ENCODE measurements at regions of chr2 and their contacts with region 1.

Region 1: GRCh38 chr2:144320491-144320890 is 199.4 kb downstream of the ZEB2 start:
- DNase-seq: peak; percentile 22
- H3K4me3 Mint-ChIP-seq: peak overlapping the region; percentile 51
- H3K27ac Mint-ChIP-seq: peak overlapping the region; percentile 78
- H3K4me1 Mint-ChIP-seq: peaks cover 62% of the 10 kb centered on the region
- H3K27me3 Mint-ChIP-seq: no peaks in the 10 kb centered on the region

Region 2: GRCh38 chr2:144084114-144084661 is 236.3 kb before region 1 on chr2:
- intact Hi-C with region 1: loop called (anchors 1 kb)
- DNase-seq: no peak
- H3K4me3 Mint-ChIP-seq: no peak overlapping the region
- H3K27ac Mint-ChIP-seq: peak overlapping the region; percentile 23
- H3K4me1 Mint-ChIP-seq: peaks cover 31% of the 10 kb centered on the region
- H3K27me3 Mint-ChIP-seq: no peaks in the 10 kb centered on the region

Region 3: DNA sequence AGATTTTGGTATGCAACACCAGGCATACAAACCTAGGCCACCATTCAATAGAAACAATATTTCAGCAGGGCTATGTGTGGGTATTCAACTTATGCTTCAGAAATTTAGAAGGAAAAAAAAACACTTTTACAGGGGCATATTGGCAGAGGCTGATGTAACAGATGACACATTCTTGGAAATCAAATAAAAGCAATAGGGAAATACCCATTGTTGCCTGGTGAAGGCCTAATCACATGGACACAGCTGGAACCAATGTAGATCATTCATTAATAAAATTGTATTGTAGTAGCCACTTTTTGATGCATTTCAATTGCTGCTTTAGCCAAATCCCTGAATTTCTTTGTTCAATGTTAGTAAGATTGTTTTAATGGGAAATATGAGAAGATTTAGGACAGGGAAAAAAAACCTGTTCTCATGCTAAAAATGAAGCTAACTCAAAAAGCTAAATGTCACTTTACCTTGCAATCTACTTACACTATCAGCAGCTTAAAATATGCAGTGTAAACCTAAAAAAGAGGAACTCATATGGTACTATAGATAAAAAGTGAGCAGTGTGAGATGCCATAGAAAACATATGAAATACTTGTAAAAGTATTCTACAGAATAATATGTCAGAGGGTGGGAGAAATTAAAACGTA is 89.9 kb before region 1 on chr2:
- intact Hi-C with region 1: loop called (anchors 1 kb)
- DNase-seq: no peak
- H3K4me3 Mint-ChIP-seq: no peak overlapping the region
- H3K27ac Mint-ChIP-seq: peak overlapping the region; percentile 31
- H3K4me1 Mint-ChIP-seq: peaks cover 65% of the 10 kb centered on the region
- H3K27me3 Mint-ChIP-seq: no peaks in the 10 kb centered on the region

Region 4: GRCh38 chr2:144304202-144304601 is 16.3 kb before region 1 on chr2:
- intact Hi-C with region 1: loop called (anchors 2 kb)
- DNase-seq: no peak
- H3K4me3 Mint-ChIP-seq: no peak overlapping the region
- H3K27ac Mint-ChIP-seq: peak overlapping the region; percentile 16
- H3K4me1 Mint-ChIP-seq: peaks cover 21% of the 10 kb centered on the region
- H3K27me3 Mint-ChIP-seq: no peaks in the 10 kb centered on the region

Region 5: DNA sequence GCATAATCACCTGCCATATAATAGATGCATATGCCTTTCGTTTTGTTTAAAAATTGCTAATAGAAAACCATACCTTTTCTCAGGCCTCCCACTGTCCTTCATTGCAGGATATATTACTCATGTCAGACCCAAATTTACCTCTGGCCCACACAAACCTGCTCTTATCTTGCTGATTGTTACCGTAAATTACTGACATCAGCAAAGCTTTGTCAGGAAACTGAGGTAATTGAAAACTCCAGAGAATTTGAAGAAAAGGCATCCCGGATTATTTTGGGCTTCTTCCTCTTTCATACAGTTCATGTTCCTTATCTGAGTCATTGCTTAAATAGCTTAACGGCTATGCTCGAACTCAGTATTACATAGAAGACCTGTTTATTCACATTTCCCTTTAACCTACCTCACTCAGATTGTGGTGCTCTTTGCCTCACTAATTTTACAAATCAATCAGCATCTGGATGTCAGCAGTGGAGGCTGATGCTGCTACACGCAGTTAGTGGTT is 53.7 kb after region 1 on chr2:
- intact Hi-C with region 1: loop called (anchors 1 kb)
- DNase-seq: no peak
- H3K4me3 Mint-ChIP-seq: no peak overlapping the region
- H3K27ac Mint-ChIP-seq: peak overlapping the region; percentile 86
- H3K4me1 Mint-ChIP-seq: peaks cover 83% of the 10 kb centered on the region
- H3K27me3 Mint-ChIP-seq: no peaks in the 10 kb centered on the region

Region 6: GRCh38 chr2:144389151-144389929 is 68.8 kb after region 1 on chr2:
- intact Hi-C with region 1: no loop called
- DNase-seq: no peak
- H3K4me3 Mint-ChIP-seq: no peak overlapping the region
- H3K27ac Mint-ChIP-seq: no peak overlapping the region
- H3K4me1 Mint-ChIP-seq: peaks cover 4% of the 10 kb centered on the region
- H3K27me3 Mint-ChIP-seq: peaks cover 2% of the 10 kb centered on the region

Region 7: GRCh38 chr2:144516981-144517865 is 196.7 kb after region 1 on chr2:
- intact Hi-C with region 1: loop called (anchors 2 kb)
- DNase-seq: peak; percentile 57
- H3K4me3 Mint-ChIP-seq: no peak overlapping the region
- H3K27ac Mint-ChIP-seq: peak overlapping the region; percentile 99
- H3K4me1 Mint-ChIP-seq: peaks cover 25% of the 10 kb centered on the region
- H3K27me3 Mint-ChIP-seq: peaks cover 25% of the 10 kb centered on the region